Psoas muscle (tissue), 8 donors: ENCODE measurements at regions of chr2 and their contacts with region 1.

Region 1: GRCh38 chr2:95121407-95122196 is at the start of gene MRPS5:
- DNase-seq: peak; percentile 88 to 95
- ATAC-seq: peak; percentile 97 to 98 (median 98)
- H3K4me3 ChIP-seq: peak within 1 kb of the TSS; percentile 92
- H3K27ac ChIP-seq: peak within 1 kb of the TSS; percentile 97
- H3K4me1 ChIP-seq: peaks cover 25% of the 10 kb centered on the region
- H3K27me3 ChIP-seq: no peaks in the 10 kb centered on the region
- CTCF ChIP-seq: no peak
- total RNA-seq, gene MRPS5: 45.6 to 79.0 (median 53.4) TPM

Region 2: GRCh38 chr2:95159690-95160449 is 38.3 kb after region 1 on chr2 and contains the start of gene ZNF514:
- intact Hi-C with region 1: loop called (anchors 2 kb)
- DNase-seq: peak; percentile 85 to 89
- ATAC-seq: peak; percentile 91 to 94 (median 94)
- H3K4me3 ChIP-seq: peak within 1 kb of the TSS; percentile 76
- H3K27ac ChIP-seq: peak within 1 kb of the TSS; percentile 88
- H3K4me1 ChIP-seq: peaks cover 21% of the 10 kb centered on the region
- H3K27me3 ChIP-seq: no peaks in the 10 kb centered on the region
- CTCF ChIP-seq: no peak
- total RNA-seq, gene ZNF514: 11.0 to 14.5 (median 14.2) TPM

Region 3: GRCh38 chr2:95273953-95274853 is 152.6 kb after region 1 on chr2 and contains the start of gene PROM2:
- intact Hi-C with region 1: no loop called
- DNase-seq: peak in 1 of 2 donors; percentile 36
- ATAC-seq: no peak
- H3K4me3 ChIP-seq: no peak within 1 kb of the TSS
- H3K27ac ChIP-seq: no peak within 1 kb of the TSS
- H3K4me1 ChIP-seq: no peaks in the 10 kb centered on the region
- H3K27me3 ChIP-seq: no peaks in the 10 kb centered on the region
- CTCF ChIP-seq: no peak
- total RNA-seq, gene PROM2: 0.54 to 1.4 (median 1.1) TPM

Region 4: DNA sequence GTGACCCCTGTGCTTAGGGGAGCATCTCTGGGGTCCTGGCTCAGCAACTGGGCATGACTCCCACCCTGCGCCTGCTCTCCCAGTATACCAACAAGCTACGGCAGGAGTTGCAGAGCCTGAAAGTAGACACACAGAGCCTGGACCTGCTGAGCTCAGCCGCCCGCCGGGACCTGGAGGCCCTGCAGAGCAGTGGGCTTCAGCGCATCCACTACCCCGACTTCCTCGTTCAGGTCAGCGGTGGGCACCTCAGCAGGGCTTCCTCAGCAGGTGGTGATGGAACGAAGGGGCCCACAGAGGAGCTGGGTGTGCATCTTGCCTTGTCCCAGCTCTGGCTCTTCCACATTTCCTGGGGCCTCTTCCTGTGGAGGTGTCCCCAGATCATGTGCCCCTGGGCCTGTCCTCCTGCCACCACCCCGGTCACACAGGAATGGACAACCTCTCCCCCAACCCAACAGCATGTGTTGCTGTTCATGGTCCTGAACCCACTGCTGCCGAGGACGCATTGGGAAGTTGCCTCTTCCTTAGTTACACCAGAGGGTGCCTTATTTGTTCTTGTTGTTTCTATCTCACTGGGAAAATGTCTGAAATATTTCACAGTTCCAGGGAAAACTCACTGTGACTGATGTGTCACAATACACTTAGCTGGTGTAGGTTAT is 163.4 kb after region 1 on chr2:
- intact Hi-C with region 1: no loop called
- DNase-seq: no peak
- ATAC-seq: no peak
- H3K4me3 ChIP-seq: no peak overlapping the region
- H3K27ac ChIP-seq: no peak overlapping the region
- H3K4me1 ChIP-seq: no peaks in the 10 kb centered on the region
- H3K27me3 ChIP-seq: no peaks in the 10 kb centered on the region
- CTCF ChIP-seq: no peak

Region 5: GRCh38 chr2:95372216-95372829 is 250.7 kb after region 1 on chr2:
- intact Hi-C with region 1: no loop called
- DNase-seq: no peak
- ATAC-seq: no peak
- H3K4me3 ChIP-seq: no peak overlapping the region
- H3K27ac ChIP-seq: no peak overlapping the region
- H3K4me1 ChIP-seq: no peaks in the 10 kb centered on the region
- H3K27me3 ChIP-seq: no peaks in the 10 kb centered on the region
- CTCF ChIP-seq: no peak